ENCODE measurements at regions of chr15 and their contacts with region 1.

Region 1: GRCh38 chr15:56365075-56365711 is at the start of gene TEX9:
- DNase-seq: peak; percentile 91
- ATAC-seq: peak; percentile 98
- H3K4me3 Mint-ChIP-seq: peak within 1 kb of the TSS; percentile 76
- H3K27ac Mint-ChIP-seq: peak within 1 kb of the TSS; percentile 42
- H3K4me1 Mint-ChIP-seq: peaks cover 13% of the 10 kb centered on the region
- H3K27me3 Mint-ChIP-seq: peaks cover 25% of the 10 kb centered on the region
- total RNA-seq, gene TEX9: 1.5 to 1.8 TPM

Region 2: GRCh38 chr15:55993111-55993803 is 371.9 kb before region 1 on chr15 and contains the start of gene NEDD4:
- CTCF ChIA-PET with region 1: no interaction called
- POLR2A ChIA-PET with region 1: no interaction called
- intact Hi-C with region 1: loop called in 1 of 2 experiments (anchors 1 kb)
- DNase-seq: peak; percentile 86
- ATAC-seq: peak; percentile 91
- H3K4me3 Mint-ChIP-seq: peak within 1 kb of the TSS; percentile 84
- H3K27ac Mint-ChIP-seq: peak within 1 kb of the TSS; percentile 79
- H3K4me1 Mint-ChIP-seq: peaks cover 22% of the 10 kb centered on the region
- H3K27me3 Mint-ChIP-seq: no peaks in the 10 kb centered on the region
- total RNA-seq, gene NEDD4: 22.4 to 23.3 TPM

Region 3: DNA sequence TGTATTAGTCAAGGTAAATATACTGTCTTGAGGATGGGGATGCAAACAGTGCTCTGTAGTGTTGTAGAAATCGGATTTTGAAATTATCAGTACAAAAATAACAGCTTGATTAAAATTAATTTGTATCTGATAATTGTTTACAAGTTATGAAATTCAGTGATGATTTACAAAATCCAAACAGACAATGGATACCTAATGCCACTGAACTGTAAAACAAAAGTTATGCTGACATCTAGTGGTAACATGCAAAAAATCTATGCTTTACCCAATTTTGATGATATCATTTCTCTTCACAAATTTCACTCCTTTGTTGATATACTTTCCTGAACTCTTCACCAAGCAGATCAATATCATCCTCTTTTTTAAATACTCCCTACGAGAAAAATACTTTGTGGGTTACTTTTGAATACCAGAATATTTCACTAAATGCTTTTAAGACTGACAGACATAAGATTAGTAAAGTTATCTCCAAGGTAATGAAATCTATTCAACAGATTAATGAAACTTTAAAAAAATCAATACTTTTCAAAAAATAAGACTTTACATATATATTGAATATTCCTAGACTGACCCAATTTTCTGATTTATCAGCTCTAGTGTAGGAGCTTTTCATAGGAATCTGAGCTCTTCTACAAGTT is 63.7 kb after region 1 on chr15:
- CTCF ChIA-PET with region 1: no interaction called
- POLR2A ChIA-PET with region 1: no interaction called
- intact Hi-C with region 1: loop called in 1 of 2 experiments (anchors 2 kb)
- DNase-seq: no peak
- ATAC-seq: no peak
- H3K4me3 Mint-ChIP-seq: no peak overlapping the region
- H3K27ac Mint-ChIP-seq: no peak overlapping the region
- H3K4me1 Mint-ChIP-seq: no peaks in the 10 kb centered on the region
- H3K27me3 Mint-ChIP-seq: peaks cover 3% of the 10 kb centered on the region

Region 4: GRCh38 chr15:56464893-56465520 is 99.8 kb after region 1 on chr15 and contains the start of gene MNS1:
- CTCF ChIA-PET with region 1: no interaction called
- POLR2A ChIA-PET with region 1: no interaction called
- intact Hi-C with region 1: loop called (anchors 5 to 10 kb)
- DNase-seq: peak; percentile 90
- ATAC-seq: peak; percentile 97
- H3K4me3 Mint-ChIP-seq: peak within 1 kb of the TSS; percentile 84
- H3K27ac Mint-ChIP-seq: peak within 1 kb of the TSS; percentile 42
- H3K4me1 Mint-ChIP-seq: peaks cover 29% of the 10 kb centered on the region
- H3K27me3 Mint-ChIP-seq: peaks cover 19% of the 10 kb centered on the region
- total RNA-seq, gene MNS1: 0.41 to 0.74 TPM

Region 5: GRCh38 chr15:56631765-56632164 is 266.6 kb after region 1 on chr15:
- CTCF ChIA-PET with region 1: no interaction called
- POLR2A ChIA-PET with region 1: no interaction called
- intact Hi-C with region 1: no loop called
- DNase-seq: no peak
- ATAC-seq: no peak
- H3K4me3 Mint-ChIP-seq: no peak overlapping the region
- H3K27ac Mint-ChIP-seq: no peak overlapping the region
- H3K4me1 Mint-ChIP-seq: peaks cover 4% of the 10 kb centered on the region
- H3K27me3 Mint-ChIP-seq: no peaks in the 10 kb centered on the region